Dendritic cell treated with granulocyte-macrophage colony-stimulating factor and Interleukin-4, amounts not matched to agents 40 ng/mL and 50 ng/mL, for 4 days (primary cell): ENCODE measurements at regions of chr14 and their contacts with region 1.

Region 1: DNA sequence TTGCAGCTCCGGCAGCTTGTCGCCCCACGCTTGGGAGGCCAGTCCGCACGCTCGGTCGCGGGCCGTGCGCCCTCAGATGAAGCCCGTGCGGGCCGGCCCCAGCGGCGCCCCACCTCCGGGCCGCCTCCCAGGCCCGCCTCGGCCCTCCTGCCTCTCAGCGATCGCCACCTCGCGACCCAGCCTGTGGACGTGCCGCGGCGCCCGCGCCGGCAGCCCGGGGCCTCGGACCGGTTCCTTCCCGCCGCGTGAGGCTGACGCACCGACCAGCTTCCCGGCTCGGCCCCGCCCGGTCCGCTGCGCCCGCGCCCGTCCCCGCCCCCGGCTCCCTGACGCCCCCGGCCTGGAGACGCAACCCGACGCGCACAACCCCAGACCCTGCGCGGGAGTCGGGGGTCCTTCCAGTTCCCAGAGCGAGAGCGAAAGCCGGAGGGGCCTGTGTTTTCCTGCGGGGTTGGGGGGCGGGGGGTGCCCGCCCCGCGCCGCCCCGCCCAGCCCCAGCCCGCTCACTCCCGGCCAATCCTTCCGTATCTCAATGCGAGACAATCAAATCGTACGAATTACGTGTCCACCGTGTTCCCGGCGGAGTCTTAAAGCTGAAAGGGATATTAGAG is at the start of gene ERO1A:
- H3K4me3 Mint-ChIP-seq: peak within 1 kb of the TSS; percentile 87
- H3K27ac Mint-ChIP-seq: peak within 1 kb of the TSS; percentile 92
- H3K4me1 Mint-ChIP-seq: peaks cover 58% of the 10 kb centered on the region
- H3K27me3 Mint-ChIP-seq: no peaks in the 10 kb centered on the region

Region 2: DNA sequence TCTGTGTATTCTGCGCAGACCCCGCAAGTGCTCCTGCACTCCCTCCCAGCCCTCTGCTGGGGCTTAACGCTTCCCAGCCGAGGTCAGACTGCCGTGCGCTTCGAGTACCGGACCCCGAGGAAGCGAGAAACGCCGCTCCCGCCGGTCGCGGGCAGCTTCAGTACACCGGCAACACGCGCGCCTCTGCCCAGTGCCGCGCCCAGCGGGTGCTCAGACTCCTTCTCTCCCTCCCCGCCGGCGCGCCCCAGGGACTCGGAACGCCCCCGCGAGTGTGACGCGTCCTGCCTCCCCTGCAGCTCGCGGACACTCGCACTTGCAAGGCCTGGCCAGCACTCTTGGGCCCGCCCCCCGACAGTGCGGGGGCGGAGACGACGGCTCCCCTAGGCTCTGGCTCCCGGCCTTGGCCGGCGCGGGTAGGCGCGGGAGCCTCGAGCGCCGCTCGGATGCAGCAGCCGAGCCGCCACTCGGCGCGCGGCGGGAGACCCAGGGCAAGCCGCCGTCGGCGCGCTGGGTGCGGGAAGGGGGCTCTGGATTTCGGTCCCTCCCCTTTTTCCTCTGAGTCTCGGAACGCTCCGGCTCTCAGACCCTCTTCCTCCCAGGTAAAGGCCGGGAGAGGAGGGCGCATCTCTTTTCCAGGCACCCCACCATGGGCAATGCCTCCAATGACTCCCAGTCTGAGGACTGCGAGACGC is 381.5 kb before region 1 on chr14 and contains the start of gene PTGER2:
- intact Hi-C with region 1: loop called (anchors 10 kb)
- H3K4me3 Mint-ChIP-seq: peak within 1 kb of the TSS; percentile 99
- H3K27ac Mint-ChIP-seq: peak within 1 kb of the TSS; percentile 98
- H3K4me1 Mint-ChIP-seq: peaks cover 75% of the 10 kb centered on the region
- H3K27me3 Mint-ChIP-seq: peaks cover 11% of the 10 kb centered on the region

Region 3: GRCh38 chr14:52413729-52414408 is 281.7 kb before region 1 on chr14:
- intact Hi-C with region 1: no loop called
- H3K4me3 Mint-ChIP-seq: no peak overlapping the region
- H3K27ac Mint-ChIP-seq: no peak overlapping the region
- H3K4me1 Mint-ChIP-seq: peaks cover 5% of the 10 kb centered on the region
- H3K27me3 Mint-ChIP-seq: peaks cover 42% of the 10 kb centered on the region

Region 4: GRCh38 chr14:52650774-52651173 is 44.8 kb before region 1 on chr14:
- intact Hi-C with region 1: no loop called
- H3K4me3 Mint-ChIP-seq: no peak overlapping the region
- H3K27ac Mint-ChIP-seq: no peak overlapping the region
- H3K4me1 Mint-ChIP-seq: no peaks in the 10 kb centered on the region
- H3K27me3 Mint-ChIP-seq: no peaks in the 10 kb centered on the region

Region 5: GRCh38 chr14:52706724-52707706 is 11.4 kb after region 1 on chr14 and contains the start of gene PSMC6:
- intact Hi-C with region 1: loop called (anchors 1 kb)
- H3K4me3 Mint-ChIP-seq: peak within 1 kb of the TSS; percentile 88
- H3K27ac Mint-ChIP-seq: peak within 1 kb of the TSS; percentile 84
- H3K4me1 Mint-ChIP-seq: peaks cover 26% of the 10 kb centered on the region
- H3K27me3 Mint-ChIP-seq: no peaks in the 10 kb centered on the region

Region 6: GRCh38 chr14:52729925-52730667 is 34.5 kb after region 1 on chr14 and contains the start of gene STYX:
- intact Hi-C with region 1: loop called (anchors 5 kb)
- H3K4me3 Mint-ChIP-seq: peak within 1 kb of the TSS; percentile 94
- H3K27ac Mint-ChIP-seq: peak within 1 kb of the TSS; percentile 97
- H3K4me1 Mint-ChIP-seq: peaks cover 20% of the 10 kb centered on the region
- H3K27me3 Mint-ChIP-seq: no peaks in the 10 kb centered on the region

Region 7: GRCh38 chr14:52741865-52742264 is 46.3 kb after region 1 on chr14:
- intact Hi-C with region 1: no loop called
- H3K4me3 Mint-ChIP-seq: peak overlapping the region; percentile 9
- H3K27ac Mint-ChIP-seq: peak overlapping the region; percentile 85
- H3K4me1 Mint-ChIP-seq: peaks cover 26% of the 10 kb centered on the region
- H3K27me3 Mint-ChIP-seq: no peaks in the 10 kb centered on the region